Cardiac septum (tissue), 1 donor: ENCODE measurements at regions of chr4 and their contacts with region 1.

Region 1: DNA sequence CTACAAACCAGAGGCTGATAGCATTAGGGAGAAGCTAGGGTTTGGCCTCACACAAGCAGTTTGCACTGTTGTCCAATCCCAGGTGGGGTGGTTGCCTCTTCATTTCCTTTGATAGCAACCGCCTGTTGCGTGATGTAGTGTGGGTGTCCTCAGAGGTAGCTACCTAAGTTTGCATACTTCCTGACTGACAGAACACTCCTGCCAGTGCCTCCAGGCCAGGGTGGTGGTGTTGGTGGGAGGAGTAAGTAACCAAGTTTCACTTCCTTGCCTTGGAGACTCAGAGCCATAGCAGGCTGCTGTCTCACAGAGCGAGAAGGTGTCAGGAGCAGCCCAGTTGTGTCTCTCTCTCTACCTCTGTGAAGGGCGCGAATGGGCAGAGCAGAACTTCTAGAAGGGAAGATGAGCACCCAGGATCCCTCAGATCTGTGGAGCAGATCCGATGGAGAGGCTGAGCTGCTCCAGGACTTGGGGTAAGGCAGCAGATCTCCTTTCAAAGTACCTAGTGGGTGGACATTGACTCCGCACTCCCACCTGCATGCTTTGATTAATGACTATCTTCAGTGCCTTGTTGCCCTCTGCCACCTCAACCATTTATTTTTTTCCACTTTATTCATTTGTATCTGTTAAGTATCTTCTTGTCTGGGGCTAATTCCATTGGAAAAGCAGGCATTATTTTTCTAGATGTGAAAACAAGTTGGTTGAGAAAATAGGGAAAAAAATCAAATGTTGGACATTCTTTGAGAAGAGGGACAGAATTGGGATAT is at the start of gene DAPP1:
- DNase-seq: peak; percentile 82
- total RNA-seq, gene DAPP1: 0.43 TPM

Region 2: GRCh38 chr4:99885063-99885664 is 68.4 kb after region 1 on chr4:
- intact Hi-C with region 1: loop called (anchors 5 kb)
- DNase-seq: no peak